Transverse colon (tissue), 4 donors: ENCODE measurements at regions of chr9 and their contacts with region 1.

Region 1: DNA sequence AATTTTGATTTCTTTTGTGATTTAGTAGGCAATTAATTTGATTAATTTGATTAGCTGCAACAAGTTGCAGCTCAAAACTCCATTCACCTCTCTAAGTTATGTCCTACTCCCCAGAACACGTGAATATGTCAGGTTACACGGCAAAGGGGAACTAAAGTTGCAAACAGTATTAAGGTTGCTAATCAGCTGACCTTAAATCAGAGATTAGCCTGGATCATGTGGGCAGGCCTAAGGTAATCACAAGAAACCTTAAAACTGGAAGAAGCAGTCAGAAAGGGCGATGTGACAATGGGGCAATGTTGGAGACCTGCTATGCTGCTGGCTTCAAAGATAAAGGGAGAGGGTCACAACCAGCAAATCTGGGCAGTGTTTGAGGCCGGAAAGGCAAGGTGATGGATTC is 47.3 kb upstream of the ANXA1 start:
- DNase-seq: no peak
- H3K4me3 ChIP-seq: no peak overlapping the region
- H3K27ac ChIP-seq: no peak overlapping the region
- H3K4me1 ChIP-seq: no peaks in the 10 kb centered on the region
- H3K27me3 ChIP-seq: no peaks in the 10 kb centered on the region
- CTCF ChIP-seq: no peak
- EP300 ChIP-seq: no peak
- POLR2A ChIP-seq: no peak

Region 2: GRCh38 chr9:73183917-73184861 is 79.8 kb after region 1 on chr9:
- in situ Hi-C with region 1: loop called (anchors 5 to 10 kb)
- intact Hi-C with region 1: loop called (anchors 2 kb)
- DNase-seq: no peak
- H3K4me3 ChIP-seq: no peak overlapping the region
- H3K27ac ChIP-seq: no peak overlapping the region
- H3K4me1 ChIP-seq: no peaks in the 10 kb centered on the region
- H3K27me3 ChIP-seq: no peaks in the 10 kb centered on the region
- CTCF ChIP-seq: peak; percentile 52 to 73 (median 60)
- EP300 ChIP-seq: no peak
- POLR2A ChIP-seq: no peak